A673 (cell line): ENCODE measurements at regions of chr11 and their contacts with region 1.

Region 1: DNA sequence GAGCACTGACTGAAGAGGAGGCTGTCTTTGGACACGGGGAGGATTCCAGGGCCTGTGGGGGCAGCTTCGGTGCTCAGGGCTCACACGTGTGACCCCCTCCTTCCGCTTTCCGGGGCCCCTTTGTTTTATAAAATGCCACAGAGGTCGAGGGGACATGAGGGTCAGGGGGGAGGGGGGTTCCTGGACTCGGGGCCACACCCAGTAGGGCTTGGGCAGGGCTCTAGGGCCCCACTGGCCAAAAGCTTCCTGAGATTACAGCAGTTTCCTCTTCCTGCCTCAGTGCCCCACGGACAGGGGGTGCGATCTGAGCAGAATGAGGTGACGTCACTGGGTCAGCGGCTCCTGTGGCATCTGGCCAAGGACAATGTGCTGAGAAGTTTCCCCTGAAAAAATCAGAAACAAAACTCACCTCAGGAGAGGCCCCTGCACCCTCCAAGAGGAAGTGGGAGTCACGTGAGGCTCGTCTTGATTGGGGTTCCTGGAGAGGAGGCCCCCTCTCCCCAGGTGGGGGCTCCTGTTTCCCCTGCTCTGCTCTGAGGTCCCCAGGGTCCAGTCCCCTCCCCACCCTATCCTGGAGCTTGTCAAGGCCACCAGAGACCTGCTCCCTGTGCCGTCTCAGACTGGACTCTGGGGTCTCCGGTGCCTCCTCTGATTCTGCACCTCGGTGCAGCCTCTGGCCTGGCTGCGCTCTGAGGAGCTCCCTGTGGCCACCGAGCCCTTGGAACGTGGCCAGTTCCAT is 6.4 kb upstream of the IFITM3 start:
- DNase-seq: no peak
- H3K4me3 ChIP-seq: no peak overlapping the region
- H3K27ac ChIP-seq: peak overlapping the region; percentile 47
- H3K4me1 ChIP-seq: peaks cover 5% of the 10 kb centered on the region
- H3K27me3 ChIP-seq: no peaks in the 10 kb centered on the region
- CTCF ChIP-seq: no peak

Region 2: GRCh38 chr11:207208-207862 is 119.7 kb before region 1 on chr11 and contains the starts of genes BET1L and RIC8A:
- CTCF ChIA-PET with region 1: no interaction called
- POLR2A ChIA-PET with region 1: no interaction called
- intact Hi-C with region 1: no loop called
- DNase-seq: peak; percentile 98
- H3K4me3 ChIP-seq: peak within 1 kb of the TSS; percentile 69
- H3K27ac ChIP-seq: peak within 1 kb of the TSS; percentile 98
- H3K4me1 ChIP-seq: peaks cover 13% of the 10 kb centered on the region
- H3K27me3 ChIP-seq: no peaks in the 10 kb centered on the region
- CTCF ChIP-seq: no peak
- total RNA-seq, gene BET1L: 22.2 and 26.2 TPM in 2 replicates
- total RNA-seq, gene RIC8A: 78.2 and 88.2 TPM in 2 replicates

Region 3: DNA sequence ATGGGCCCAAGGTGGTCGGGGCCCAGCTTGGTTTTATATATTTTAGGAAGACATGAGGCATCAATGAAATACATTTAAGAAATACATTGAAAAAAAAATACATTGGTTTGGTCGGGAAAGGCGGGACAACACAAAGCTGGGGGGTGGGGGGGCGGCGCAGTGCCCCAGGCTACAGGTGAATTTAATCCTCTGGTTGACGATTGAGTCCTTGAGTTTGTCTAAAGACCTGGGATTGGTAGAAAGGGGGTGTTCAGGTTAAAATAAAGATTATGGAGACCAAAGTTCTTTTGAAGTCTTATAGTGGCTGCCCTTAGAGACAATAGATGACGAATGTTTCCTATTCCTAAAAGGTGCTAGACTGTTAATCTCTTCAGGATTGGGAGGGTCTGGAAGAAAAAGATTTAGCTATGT is 10.1 kb before region 1 on chr11:
- CTCF ChIA-PET with region 1: no interaction called
- POLR2A ChIA-PET with region 1: no interaction called
- intact Hi-C with region 1: loop called (anchors 1 kb)
- DNase-seq: no peak
- H3K4me3 ChIP-seq: no peak overlapping the region
- H3K27ac ChIP-seq: no peak overlapping the region
- H3K4me1 ChIP-seq: peaks cover 13% of the 10 kb centered on the region
- H3K27me3 ChIP-seq: no peaks in the 10 kb centered on the region
- CTCF ChIP-seq: no peak